Activated CD8-positive, alpha-beta T cell treated with anti-CD3 and anti-CD28 coated beads for 36 hours (primary cell): ENCODE measurements at regions of chr15 and their contacts with region 1.

Region 1: GRCh38 chr15:59528965-59529402 is 82.6 kb upstream of the GCNT3 start:
- DNase-seq: peak; percentile 79
- ATAC-seq: peak; percentile 87
- H3K4me3 Mint-ChIP-seq: no peak overlapping the region
- H3K27ac Mint-ChIP-seq: no peak overlapping the region
- H3K4me1 Mint-ChIP-seq: peaks cover 13% of the 10 kb centered on the region
- H3K27me3 Mint-ChIP-seq: no peaks in the 10 kb centered on the region
- CTCF ChIP-seq: peak; percentile 93

Region 2: GRCh38 chr15:59217876-59218498 is 311.0 kb before region 1 on chr15:
- CTCF ChIA-PET with region 1: no interaction called
- POLR2A ChIA-PET with region 1: no interaction called
- intact Hi-C with region 1: no loop called
- DNase-seq: no peak
- ATAC-seq: no peak
- H3K4me3 Mint-ChIP-seq: no peak overlapping the region
- H3K27ac Mint-ChIP-seq: no peak overlapping the region
- H3K4me1 Mint-ChIP-seq: no peaks in the 10 kb centered on the region
- H3K27me3 Mint-ChIP-seq: no peaks in the 10 kb centered on the region
- CTCF ChIP-seq: no peak

Region 3: GRCh38 chr15:59247364-59247763 is 281.6 kb before region 1 on chr15:
- CTCF ChIA-PET with region 1: interaction called, 16 read pairs
- POLR2A ChIA-PET with region 1: no interaction called
- intact Hi-C with region 1: no loop called
- DNase-seq: peak; percentile 79
- ATAC-seq: peak; percentile 69
- H3K4me3 Mint-ChIP-seq: no peak overlapping the region
- H3K27ac Mint-ChIP-seq: no peak overlapping the region
- H3K4me1 Mint-ChIP-seq: peaks cover 19% of the 10 kb centered on the region
- H3K27me3 Mint-ChIP-seq: peaks cover 2% of the 10 kb centered on the region
- CTCF ChIP-seq: peak; percentile 69

Region 4: DNA sequence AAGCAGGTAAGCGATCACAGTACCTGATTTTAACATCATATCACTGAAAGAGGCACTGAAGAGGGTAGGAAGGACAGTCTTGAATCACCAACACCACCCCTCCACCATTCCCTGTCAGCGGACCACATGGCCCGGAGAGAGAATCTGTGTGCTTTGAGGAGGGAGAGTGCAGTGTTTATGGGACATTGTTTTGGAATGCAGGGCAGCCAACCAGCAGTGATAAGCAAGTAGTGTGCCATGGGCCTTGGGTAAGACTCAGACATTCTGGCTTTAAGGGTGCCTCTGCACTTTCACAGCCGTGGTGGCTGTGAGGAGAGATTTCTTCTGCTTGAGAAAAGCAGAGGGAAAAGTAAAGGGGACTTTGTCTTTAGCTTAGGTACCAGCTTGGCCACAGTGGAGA is 44.6 kb before region 1 on chr15:
- CTCF ChIA-PET with region 1: no interaction called
- POLR2A ChIA-PET with region 1: no interaction called
- intact Hi-C with region 1: no loop called
- DNase-seq: no peak
- ATAC-seq: no peak
- H3K4me3 Mint-ChIP-seq: no peak overlapping the region
- H3K27ac Mint-ChIP-seq: no peak overlapping the region
- H3K4me1 Mint-ChIP-seq: no peaks in the 10 kb centered on the region
- H3K27me3 Mint-ChIP-seq: peaks cover 12% of the 10 kb centered on the region
- CTCF ChIP-seq: no peak

Region 5: GRCh38 chr15:59501597-59501996 is 27.4 kb before region 1 on chr15:
- CTCF ChIA-PET with region 1: interaction called, 30 read pairs
- POLR2A ChIA-PET with region 1: no interaction called
- intact Hi-C with region 1: no loop called
- DNase-seq: peak; percentile 44
- ATAC-seq: peak; percentile 34
- H3K4me3 Mint-ChIP-seq: no peak overlapping the region
- H3K27ac Mint-ChIP-seq: no peak overlapping the region
- H3K4me1 Mint-ChIP-seq: no peaks in the 10 kb centered on the region
- H3K27me3 Mint-ChIP-seq: no peaks in the 10 kb centered on the region
- CTCF ChIP-seq: peak; percentile 64

Region 6: GRCh38 chr15:59591356-59591755 is 62.4 kb after region 1 on chr15:
- CTCF ChIA-PET with region 1: interaction called, 10 read pairs
- POLR2A ChIA-PET with region 1: no interaction called
- intact Hi-C with region 1: no loop called
- DNase-seq: no peak
- ATAC-seq: no peak
- H3K4me3 Mint-ChIP-seq: no peak overlapping the region
- H3K27ac Mint-ChIP-seq: no peak overlapping the region
- H3K4me1 Mint-ChIP-seq: peaks cover 12% of the 10 kb centered on the region
- H3K27me3 Mint-ChIP-seq: peaks cover 10% of the 10 kb centered on the region
- CTCF ChIP-seq: no peak

Region 7: DNA sequence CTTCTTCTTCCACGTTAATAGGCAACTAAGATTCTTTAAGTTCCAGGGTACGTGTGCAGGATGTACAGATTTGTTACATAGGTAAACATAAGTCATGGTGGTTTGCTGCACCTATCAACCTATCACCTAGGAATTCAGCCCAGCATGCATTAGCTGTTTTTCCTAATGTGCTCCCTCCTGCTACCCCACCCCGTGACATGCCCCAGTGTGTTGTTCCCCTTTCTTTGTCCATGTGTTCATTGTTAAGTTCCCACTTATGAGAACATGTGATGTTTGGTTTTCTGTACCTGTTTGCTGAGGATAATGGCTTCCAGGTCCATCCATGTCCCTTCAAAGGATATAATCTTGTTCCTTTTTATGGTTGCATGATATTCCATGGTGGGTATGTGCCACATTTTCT is 107.2 kb after region 1 on chr15:
- CTCF ChIA-PET with region 1: interaction called, 26 read pairs
- POLR2A ChIA-PET with region 1: no interaction called
- intact Hi-C with region 1: no loop called
- DNase-seq: no peak
- ATAC-seq: no peak
- H3K4me3 Mint-ChIP-seq: no peak overlapping the region
- H3K27ac Mint-ChIP-seq: no peak overlapping the region
- H3K4me1 Mint-ChIP-seq: peaks cover 8% of the 10 kb centered on the region
- H3K27me3 Mint-ChIP-seq: peaks cover 2% of the 10 kb centered on the region
- CTCF ChIP-seq: no peak

Region 8: GRCh38 chr15:59741274-59741906 is 212.4 kb after region 1 on chr15:
- CTCF ChIA-PET with region 1: no interaction called
- POLR2A ChIA-PET with region 1: no interaction called
- intact Hi-C with region 1: no loop called
- DNase-seq: no peak
- ATAC-seq: no peak
- H3K4me3 Mint-ChIP-seq: no peak overlapping the region
- H3K27ac Mint-ChIP-seq: no peak overlapping the region
- H3K4me1 Mint-ChIP-seq: no peaks in the 10 kb centered on the region
- H3K27me3 Mint-ChIP-seq: no peaks in the 10 kb centered on the region
- CTCF ChIP-seq: no peak